ENCODE measurements at regions of chr14 and their contacts with region 1.

Region 1: GRCh38 chr14:20652996-20653975 is 11.8 kb upstream of the OR6S1 start:
- DNase-seq: peak; percentile 91
- ATAC-seq: peak; percentile 52
- H3K4me3 Mint-ChIP-seq: peak overlapping the region; percentile 94
- H3K27ac Mint-ChIP-seq: peak overlapping the region; percentile 50; the same call in 1 of the 2 replicates
- H3K4me1 Mint-ChIP-seq: peaks cover 33% of the 10 kb centered on the region
- H3K27me3 Mint-ChIP-seq: peaks cover 38% of the 10 kb centered on the region
- CTCF ChIP-seq: no peak

Region 2: DNA sequence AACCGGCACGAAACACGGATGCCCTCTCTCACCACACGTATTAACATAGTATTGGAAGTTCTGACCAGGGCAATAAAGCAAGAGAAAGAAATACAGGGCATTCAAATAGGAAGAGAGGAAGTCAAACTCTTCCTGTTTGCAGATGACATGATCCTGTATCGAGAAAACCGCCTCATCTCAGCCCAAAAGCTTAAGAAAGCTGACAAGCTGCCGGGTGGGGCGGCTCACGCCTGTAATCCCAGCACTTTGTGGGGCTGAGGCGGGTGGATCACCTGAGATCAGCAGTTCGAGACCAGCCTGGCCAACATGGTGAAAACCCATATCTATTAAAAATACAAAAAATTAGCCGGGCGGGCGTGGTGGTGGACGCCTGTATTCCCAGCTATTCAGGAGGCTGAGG is 29.5 kb before region 1 on chr14:
- CTCF ChIA-PET with region 1: interaction called, 10 read pairs
- POLR2A ChIA-PET with region 1: interaction called, 3 read pairs
- DNase-seq: peak; percentile 43
- ATAC-seq: no peak
- H3K4me3 Mint-ChIP-seq: peak overlapping the region; percentile 93
- H3K27ac Mint-ChIP-seq: no peak overlapping the region
- H3K4me1 Mint-ChIP-seq: peaks cover 34% of the 10 kb centered on the region
- H3K27me3 Mint-ChIP-seq: peaks cover 44% of the 10 kb centered on the region
- CTCF ChIP-seq: no peak

Region 3: DNA sequence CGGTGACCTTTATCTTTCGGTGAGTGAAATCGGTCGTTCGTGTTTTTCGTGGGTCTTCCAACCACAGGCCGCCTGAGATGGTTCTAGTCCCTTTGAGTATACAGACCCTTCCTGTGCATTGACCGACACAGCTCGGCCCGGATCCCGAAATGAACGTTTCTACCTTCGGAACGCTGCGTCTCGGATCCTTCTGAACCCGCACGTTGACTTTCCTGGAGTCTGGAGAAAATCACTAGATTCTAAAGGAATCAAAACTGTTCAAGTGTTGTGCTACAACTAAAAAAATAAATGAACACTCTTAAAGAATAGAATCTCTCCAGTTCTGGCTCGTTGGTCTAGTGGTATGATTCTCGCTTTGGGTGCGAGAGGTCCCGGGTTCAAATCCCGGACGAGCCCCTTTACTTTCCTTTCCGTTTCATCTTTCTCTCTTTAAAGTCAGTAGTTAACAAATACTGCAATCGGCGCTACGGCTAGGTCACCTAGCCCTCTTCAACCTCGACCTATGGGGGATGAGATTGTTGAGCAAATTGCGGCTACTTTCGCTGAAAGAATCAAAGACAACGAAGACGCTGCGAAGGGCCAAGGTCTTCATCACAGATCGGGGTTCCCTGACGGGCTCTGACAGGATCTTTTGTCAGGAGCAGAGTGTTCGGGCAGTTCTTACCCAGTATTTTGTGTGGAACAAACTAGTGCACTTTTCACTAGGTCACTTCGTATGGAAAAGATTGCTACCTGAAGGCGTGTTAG is 20.4 kb before region 1 on chr14:
- CTCF ChIA-PET with region 1: interaction called, 30 read pairs
- POLR2A ChIA-PET with region 1: interaction called, 3 read pairs
- DNase-seq: peak; percentile 78
- ATAC-seq: peak; percentile 60
- H3K4me3 Mint-ChIP-seq: peak overlapping the region; percentile 93
- H3K27ac Mint-ChIP-seq: peak overlapping the region; percentile 78; the same call in 1 of the 2 replicates
- H3K4me1 Mint-ChIP-seq: peaks cover 14% of the 10 kb centered on the region
- H3K27me3 Mint-ChIP-seq: peaks cover 49% of the 10 kb centered on the region
- CTCF ChIP-seq: no peak

Region 4: DNA sequence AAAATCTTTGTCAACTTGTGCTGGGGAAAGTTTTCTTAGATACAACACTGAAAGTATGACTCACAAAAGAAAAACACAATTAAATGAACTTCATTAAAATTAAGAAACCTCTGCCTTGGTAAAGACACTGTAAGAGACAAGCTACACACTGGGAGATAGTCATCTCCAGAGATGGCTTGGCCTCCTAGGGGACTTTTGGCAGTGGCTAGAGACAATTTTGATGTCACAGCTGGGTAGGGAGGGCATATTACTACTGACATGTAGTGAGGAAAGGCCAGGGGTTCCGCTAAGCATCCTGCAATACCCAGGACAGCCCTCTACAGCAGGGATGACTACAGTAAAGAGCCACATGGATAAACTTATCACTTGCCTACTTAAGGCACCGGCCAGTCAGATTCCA is 22.4 kb after region 1 on chr14:
- CTCF ChIA-PET with region 1: interaction called, 106 read pairs
- POLR2A ChIA-PET with region 1: interaction called, 9 read pairs
- DNase-seq: no peak
- ATAC-seq: no peak
- H3K4me3 Mint-ChIP-seq: no peak overlapping the region
- H3K27ac Mint-ChIP-seq: no peak overlapping the region
- H3K4me1 Mint-ChIP-seq: peaks cover 20% of the 10 kb centered on the region
- H3K27me3 Mint-ChIP-seq: no peaks in the 10 kb centered on the region
- CTCF ChIP-seq: no peak

Region 5: DNA sequence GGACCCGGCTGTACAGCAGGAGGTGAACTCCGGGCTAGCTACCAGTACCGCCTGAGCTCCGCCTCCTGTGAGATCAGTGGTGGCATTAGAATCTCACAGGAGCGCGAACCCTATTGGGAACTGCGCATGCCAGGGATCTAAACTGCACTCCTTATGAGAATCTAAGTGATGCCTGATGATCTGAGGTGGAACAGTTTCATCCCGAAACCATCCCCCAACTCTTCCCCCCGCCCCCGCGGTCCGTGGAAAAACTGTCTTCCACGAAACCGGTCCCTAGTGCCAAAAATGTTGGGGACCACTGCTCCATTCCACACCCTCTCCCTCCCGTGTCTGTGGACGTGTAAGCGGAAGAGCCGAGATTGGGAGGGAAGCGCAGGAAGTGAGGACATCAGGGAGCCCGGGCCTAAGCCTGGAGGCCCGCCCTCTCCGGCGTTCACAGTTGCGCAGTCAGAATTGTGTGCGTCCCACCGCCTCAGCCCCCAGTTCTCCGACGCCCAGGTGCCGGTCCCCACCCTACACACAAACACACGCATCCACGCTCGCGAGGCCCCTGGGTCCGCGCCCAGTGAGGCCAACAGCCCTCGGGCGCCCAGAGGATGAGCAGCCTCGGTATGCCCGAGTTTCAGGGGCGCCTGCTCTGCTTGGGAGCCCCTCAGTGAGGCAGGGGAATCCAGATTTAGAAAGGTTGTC is 29.3 kb after region 1 on chr14:
- CTCF ChIA-PET with region 1: interaction called, 106 read pairs
- POLR2A ChIA-PET with region 1: interaction called, 9 read pairs
- DNase-seq: peak; percentile 73
- ATAC-seq: peak; percentile 38
- H3K4me3 Mint-ChIP-seq: no peak overlapping the region
- H3K27ac Mint-ChIP-seq: no peak overlapping the region
- H3K4me1 Mint-ChIP-seq: peaks cover 25% of the 10 kb centered on the region
- H3K27me3 Mint-ChIP-seq: peaks cover 10% of the 10 kb centered on the region
- CTCF ChIP-seq: no peak

Region 6: DNA sequence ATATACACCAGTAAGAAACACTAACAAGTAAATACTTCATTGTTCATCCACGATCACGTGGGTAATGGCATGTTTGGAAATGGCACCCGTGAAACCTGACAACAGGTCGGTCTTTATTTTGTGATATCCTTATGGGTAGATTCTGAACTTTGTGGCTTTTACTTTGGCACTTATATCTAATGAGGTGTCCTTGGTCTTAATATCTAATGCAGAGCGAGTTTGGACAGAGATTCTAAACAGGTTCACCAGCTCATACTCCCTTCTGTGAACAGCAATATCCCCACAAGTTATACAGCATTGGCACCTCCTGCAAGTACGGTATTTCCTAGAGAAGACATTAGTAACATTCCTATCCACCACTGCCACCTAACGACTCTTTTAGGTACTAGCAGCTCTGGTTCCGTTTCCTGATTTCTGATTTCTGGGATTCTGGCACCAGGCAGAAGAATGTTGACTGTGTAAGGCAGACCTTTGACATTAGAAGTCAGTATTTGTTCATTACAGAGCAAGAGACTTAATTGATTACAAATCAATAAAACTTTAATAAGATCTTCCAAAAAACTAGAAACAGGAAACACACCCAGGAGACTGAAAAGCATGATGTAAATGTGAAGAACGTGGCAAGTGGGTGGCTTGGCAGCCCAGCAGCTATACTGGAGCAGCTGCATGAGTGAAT is 37.7 kb after region 1 on chr14:
- CTCF ChIA-PET with region 1: interaction called, 106 read pairs
- POLR2A ChIA-PET with region 1: interaction called, 4 read pairs
- DNase-seq: peak; percentile 41
- ATAC-seq: peak; percentile 92
- H3K4me3 Mint-ChIP-seq: no peak overlapping the region
- H3K27ac Mint-ChIP-seq: no peak overlapping the region
- H3K4me1 Mint-ChIP-seq: peaks cover 5% of the 10 kb centered on the region; the same call in 1 of the 2 replicates
- H3K27me3 Mint-ChIP-seq: peaks cover 4% of the 10 kb centered on the region
- CTCF ChIP-seq: peak; percentile 58; the same call in 1 of the 2 replicates

Region 7: GRCh38 chr14:20873370-20874177 is 220.3 kb after region 1 on chr14:
- CTCF ChIA-PET with region 1: interaction called, 12 read pairs
- POLR2A ChIA-PET with region 1: interaction called, 3 read pairs
- DNase-seq: peak; percentile 95
- ATAC-seq: peak; percentile 98
- H3K4me3 Mint-ChIP-seq: peak overlapping the region; percentile 58
- H3K27ac Mint-ChIP-seq: peak overlapping the region; percentile 49; the same call in 1 of the 2 replicates
- H3K4me1 Mint-ChIP-seq: peaks cover 9% of the 10 kb centered on the region
- H3K27me3 Mint-ChIP-seq: peaks cover 48% of the 10 kb centered on the region
- CTCF ChIP-seq: peak; percentile 74

Measured in WTC11 (cell line).